Activated T-helper 2 cell treated with anti-CD3 and anti-CD28 coated beads, Interferon-gamma antibody, Interleukin-2, Interleukin-4, amounts not matched to agents 10 μg/mL and 5 μg/mL and 100 μg/mL, durations not matched to agents 14 hours and 24 hours and 36 hours (primary cell): ENCODE measurements at regions of chr11 and their contacts with region 1.

Region 1: GRCh38 chr11:32960553-32961164 is 55.0 kb upstream of the DEPDC7 start:
- DNase-seq: no peak
- H3K4me3 Mint-ChIP-seq: no peak overlapping the region
- H3K27ac Mint-ChIP-seq: no peak overlapping the region
- H3K4me1 Mint-ChIP-seq: peaks cover 11% of the 10 kb centered on the region
- H3K27me3 Mint-ChIP-seq: no peaks in the 10 kb centered on the region

Region 2: DNA sequence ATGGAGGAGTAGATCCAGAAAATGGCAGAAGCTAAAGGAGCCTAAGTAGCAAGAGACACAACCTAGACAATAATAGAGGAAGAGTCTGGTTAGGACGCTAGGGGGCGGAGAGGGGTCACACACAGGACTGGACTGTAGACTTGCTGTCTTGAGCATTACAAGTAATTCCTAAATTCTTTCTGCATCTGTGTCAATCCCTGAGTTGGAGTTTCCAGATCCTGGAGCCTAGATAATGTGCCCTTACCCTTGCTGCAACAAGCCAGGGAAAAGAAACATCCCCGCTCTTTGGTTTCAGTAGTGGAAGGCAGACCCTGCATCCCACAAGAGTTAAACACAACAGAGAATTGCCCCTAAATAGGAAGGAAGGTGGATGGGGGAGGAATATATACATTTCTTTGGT is 151.3 kb before region 1 on chr11:
- intact Hi-C with region 1: loop called (anchors 1 kb)
- DNase-seq: peak; percentile 27
- H3K4me3 Mint-ChIP-seq: no peak overlapping the region
- H3K27ac Mint-ChIP-seq: no peak overlapping the region
- H3K4me1 Mint-ChIP-seq: no peaks in the 10 kb centered on the region
- H3K27me3 Mint-ChIP-seq: peaks cover 8% of the 10 kb centered on the region

Region 3: DNA sequence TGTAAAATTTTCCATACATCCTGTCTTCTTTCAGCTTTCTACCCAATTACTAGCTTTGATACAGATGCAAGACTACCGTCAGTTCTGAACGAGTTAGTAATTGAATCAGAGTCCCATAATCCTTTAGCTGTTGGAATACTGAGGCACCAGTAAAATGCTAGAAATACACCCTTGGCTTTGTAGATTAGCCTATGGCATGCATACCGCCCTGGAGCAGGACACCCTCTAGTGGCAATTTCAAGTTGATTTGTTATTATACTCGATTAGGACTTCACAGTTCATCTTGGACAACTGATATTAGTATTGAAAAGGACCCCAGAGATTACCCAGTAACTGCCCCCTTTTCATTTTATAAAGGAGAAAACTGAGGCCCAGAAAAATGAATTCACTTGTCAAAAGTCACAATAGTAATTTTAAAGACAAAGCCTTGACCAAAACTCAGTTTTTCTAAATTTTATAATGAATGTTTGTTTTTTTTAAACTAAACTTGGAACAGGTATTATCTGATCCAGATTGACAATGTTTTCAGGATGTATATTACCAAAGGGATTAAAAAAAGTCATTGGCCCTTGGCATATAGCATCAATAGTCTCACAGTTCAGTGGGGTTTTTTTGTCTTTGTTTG is 369.2 kb after region 1 on chr11:
- intact Hi-C with region 1: loop called (anchors 5 kb)
- DNase-seq: no peak
- H3K4me3 Mint-ChIP-seq: no peak overlapping the region
- H3K27ac Mint-ChIP-seq: no peak overlapping the region
- H3K4me1 Mint-ChIP-seq: peaks cover 7% of the 10 kb centered on the region
- H3K27me3 Mint-ChIP-seq: no peaks in the 10 kb centered on the region